ENCODE measurements at regions of chr6 and their contacts with region 1.

Region 1: GRCh38 chr6:42453031-42453653 is 1.4 kb upstream of the TRERF1 start:
- DNase-seq: no peak
- H3K4me3 ChIP-seq: peak overlapping the region; percentile 61 to 88
- H3K27ac ChIP-seq: peak overlapping the region; percentile 92
- H3K4me1 ChIP-seq: peaks cover 40% of the 10 kb centered on the region
- H3K27me3 ChIP-seq: no peaks in the 10 kb centered on the region
- CTCF ChIP-seq: no peak
- POLR2A ChIP-seq: peak in 1 of 2 donors; percentile 76

Region 2: GRCh38 chr6:42217519-42218367 is 235.4 kb before region 1 on chr6 and contains the start of gene MRPS10:
- intact Hi-C with region 1: loop called (anchors 5 kb)
- DNase-seq: no peak
- H3K4me3 ChIP-seq: peak within 1 kb of the TSS; percentile 80 to 82
- H3K27ac ChIP-seq: peak within 1 kb of the TSS; percentile 81
- H3K4me1 ChIP-seq: peaks cover 33% of the 10 kb centered on the region
- H3K27me3 ChIP-seq: no peaks in the 10 kb centered on the region
- CTCF ChIP-seq: no peak
- POLR2A ChIP-seq: peak in 1 of 2 donors; percentile 41
- total RNA-seq, gene MRPS10: 21.4 TPM

Region 3: GRCh38 chr6:42260972-42261371 is 192.2 kb before region 1 on chr6:
- intact Hi-C with region 1: loop called (anchors 10 kb)
- DNase-seq: no peak
- H3K4me3 ChIP-seq: no peak overlapping the region
- H3K27ac ChIP-seq: no peak overlapping the region
- H3K4me1 ChIP-seq: peaks cover 12% of the 10 kb centered on the region
- H3K27me3 ChIP-seq: no peaks in the 10 kb centered on the region
- CTCF ChIP-seq: peak in 2 of 3 experiments; percentile 30 to 44
- POLR2A ChIP-seq: no peak

Region 4: DNA sequence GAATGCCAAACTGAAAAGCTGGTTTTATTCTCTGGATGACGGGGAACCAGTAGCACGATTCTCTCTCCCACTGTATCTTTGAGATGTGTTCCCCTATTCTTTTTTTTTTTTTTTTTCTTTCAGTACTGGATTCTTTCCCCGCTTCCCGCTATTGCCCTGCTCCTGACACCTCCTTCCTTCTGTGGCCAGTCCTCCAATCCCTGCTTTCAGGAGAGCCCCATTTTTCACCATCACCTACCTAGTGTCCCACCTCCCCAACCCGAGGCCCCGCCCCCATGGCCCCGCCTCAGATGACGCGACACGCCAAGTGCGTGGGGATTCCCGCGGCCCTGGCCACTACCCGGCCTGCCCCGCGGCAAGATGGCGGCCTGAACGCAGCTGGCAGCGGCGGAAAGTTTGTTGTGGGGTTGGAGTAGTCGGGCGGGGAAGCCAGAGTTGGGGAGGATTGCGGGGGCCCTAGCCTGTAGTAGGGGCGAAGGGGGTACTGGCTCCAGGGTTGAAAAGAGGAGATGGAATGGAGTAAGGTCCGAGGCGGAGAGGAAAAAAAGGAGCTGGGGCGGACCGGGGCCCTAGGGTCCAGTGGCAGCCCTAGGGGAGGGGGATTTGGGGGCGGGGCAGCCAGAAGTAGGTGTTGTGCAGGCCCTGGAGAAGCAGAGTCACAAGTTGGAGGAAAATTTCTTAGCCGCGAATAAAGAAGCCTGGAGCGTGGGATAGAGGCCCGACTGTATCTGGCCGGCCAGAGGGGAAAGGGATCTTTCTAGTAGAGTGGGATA is 1024.3 kb after region 1 on chr6 and contains the start of gene TJAP1:
- intact Hi-C with region 1: no loop called
- DNase-seq: no peak
- H3K4me3 ChIP-seq: peak within 1 kb of the TSS; percentile 67 to 90
- H3K27ac ChIP-seq: peak within 1 kb of the TSS; percentile 90
- H3K4me1 ChIP-seq: peaks cover 44% of the 10 kb centered on the region
- H3K27me3 ChIP-seq: no peaks in the 10 kb centered on the region
- CTCF ChIP-seq: no peak
- POLR2A ChIP-seq: peak in 1 of 2 donors; percentile 39
- total RNA-seq, gene TJAP1: 27.5 TPM

Measured in vagina (tissue), 2 donors.